MCF 10A (cell line): ENCODE measurements at regions of chr21 and their contacts with region 1.

Region 1: GRCh38 chr21:28516991-28517592 is 475.6 kb downstream of the LTN1 start:
- DNase-seq: peak; percentile 78
- H3K4me3 Mint-ChIP-seq: no peak overlapping the region
- H3K27ac Mint-ChIP-seq: no peak overlapping the region
- H3K4me1 Mint-ChIP-seq: peaks cover 5% of the 10 kb centered on the region
- H3K27me3 Mint-ChIP-seq: no peaks in the 10 kb centered on the region
- CTCF ChIP-seq: peak; percentile 73

Region 2: DNA sequence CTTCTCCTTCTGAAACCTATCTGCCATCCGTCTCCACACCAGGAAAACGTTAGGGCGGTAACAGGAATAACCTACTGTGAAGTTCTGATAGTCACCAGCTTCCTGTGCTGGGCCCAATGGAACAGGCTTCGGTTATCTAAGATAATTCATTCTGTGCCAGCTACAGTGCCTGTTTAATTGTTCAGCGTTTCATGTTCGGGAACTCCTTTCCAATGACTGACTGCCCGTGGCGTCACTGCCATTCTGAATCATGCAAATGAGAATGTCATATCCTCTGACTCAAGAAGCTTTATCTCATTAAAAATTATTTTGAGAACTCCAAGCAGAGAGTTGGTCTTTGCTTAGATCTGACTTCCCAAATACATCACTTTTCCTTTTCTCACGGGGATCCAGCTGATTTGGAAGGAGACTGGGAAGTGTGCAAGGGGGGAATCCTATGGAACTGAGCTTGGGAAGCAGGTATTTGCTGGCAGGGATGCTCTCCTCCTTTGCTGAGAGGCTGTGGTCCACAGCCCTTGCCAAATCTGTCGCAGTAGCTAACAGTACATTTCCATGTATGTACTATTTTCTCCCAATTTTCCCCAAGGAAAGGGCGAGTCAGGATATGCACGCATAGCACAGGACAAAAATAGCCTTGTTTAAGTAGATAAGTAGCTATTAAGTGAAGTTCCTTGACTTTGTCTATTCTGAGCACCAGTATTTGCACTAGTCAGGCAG is 116.9 kb after region 1 on chr21:
- CTCF ChIA-PET with region 1: interaction called, 4 read pairs
- POLR2A ChIA-PET with region 1: interaction called, 7 read pairs
- intact Hi-C with region 1: loop called (anchors 10 kb)
- DNase-seq: peak; percentile 68
- H3K4me3 Mint-ChIP-seq: no peak overlapping the region
- H3K27ac Mint-ChIP-seq: peak overlapping the region; percentile 84
- H3K4me1 Mint-ChIP-seq: peaks cover 44% of the 10 kb centered on the region
- H3K27me3 Mint-ChIP-seq: no peaks in the 10 kb centered on the region
- CTCF ChIP-seq: no peak

Region 3: GRCh38 chr21:28737674-28738419 is 220.8 kb after region 1 on chr21:
- CTCF ChIA-PET with region 1: interaction called, 40 read pairs
- POLR2A ChIA-PET with region 1: interaction called, 4 read pairs
- intact Hi-C with region 1: no loop called
- DNase-seq: peak; percentile 30
- H3K4me3 Mint-ChIP-seq: no peak overlapping the region
- H3K27ac Mint-ChIP-seq: no peak overlapping the region
- H3K4me1 Mint-ChIP-seq: peaks cover 6% of the 10 kb centered on the region
- H3K27me3 Mint-ChIP-seq: no peaks in the 10 kb centered on the region
- CTCF ChIP-seq: no peak

Region 4: DNA sequence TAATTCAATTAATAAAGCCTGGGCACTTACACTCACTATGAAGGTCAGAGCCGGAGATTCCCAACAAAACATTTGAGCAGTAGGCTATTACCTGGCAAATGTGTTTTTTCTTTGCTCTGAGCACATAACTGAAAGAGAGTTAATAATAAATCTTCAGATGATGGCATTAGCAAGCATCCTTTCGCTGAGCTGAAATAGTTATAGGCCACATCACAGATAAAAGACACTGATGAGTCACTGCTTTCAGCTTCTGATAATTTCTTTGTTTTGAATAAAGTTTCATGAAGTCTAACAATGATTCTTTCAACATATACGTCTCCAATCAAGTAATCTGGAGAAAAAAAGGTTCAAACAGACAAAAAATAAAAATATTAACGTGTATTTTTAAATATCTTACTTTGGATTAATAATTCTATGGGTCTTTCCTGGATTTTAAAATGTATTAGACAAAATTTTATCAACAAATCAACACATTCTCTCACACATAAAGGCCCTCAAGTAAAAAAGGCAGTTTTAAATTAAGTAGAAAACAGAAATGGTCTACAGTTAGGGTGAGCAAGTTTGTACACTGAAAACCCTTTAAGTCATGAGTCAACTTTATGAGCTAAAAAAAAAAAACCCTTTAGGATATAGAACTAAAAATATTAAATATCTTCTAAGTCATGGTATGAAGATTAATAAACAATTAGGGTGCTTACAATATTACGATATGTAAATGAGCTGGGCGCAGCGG is 442.4 kb after region 1 on chr21:
- CTCF ChIA-PET with region 1: no interaction called
- POLR2A ChIA-PET with region 1: no interaction called
- intact Hi-C with region 1: no loop called
- DNase-seq: peak; percentile 5
- H3K4me3 Mint-ChIP-seq: no peak overlapping the region
- H3K27ac Mint-ChIP-seq: no peak overlapping the region
- H3K4me1 Mint-ChIP-seq: no peaks in the 10 kb centered on the region
- H3K27me3 Mint-ChIP-seq: no peaks in the 10 kb centered on the region
- CTCF ChIP-seq: no peak